WTC11 (cell line): ENCODE measurements at regions of chr12 and their contacts with region 1.

Region 1: GRCh38 chr12:52278541-52279421 is 4.3 kb downstream of the KRT86 start:
- DNase-seq: peak; percentile 87
- ATAC-seq: peak; percentile 99
- H3K4me3 Mint-ChIP-seq: peak overlapping the region; percentile 74
- H3K27ac Mint-ChIP-seq: no peak overlapping the region
- H3K4me1 Mint-ChIP-seq: peaks cover 5% of the 10 kb centered on the region
- H3K27me3 Mint-ChIP-seq: peaks cover 20% of the 10 kb centered on the region
- CTCF ChIP-seq: peak; percentile 97

Region 2: GRCh38 chr12:52156736-52157565 is 121.8 kb before region 1 on chr12:
- CTCF ChIA-PET with region 1: interaction called, 17 read pairs
- POLR2A ChIA-PET with region 1: no interaction called
- DNase-seq: peak; percentile 94
- ATAC-seq: peak; percentile 88
- H3K4me3 Mint-ChIP-seq: no peak overlapping the region
- H3K27ac Mint-ChIP-seq: no peak overlapping the region
- H3K4me1 Mint-ChIP-seq: no peaks in the 10 kb centered on the region
- H3K27me3 Mint-ChIP-seq: no peaks in the 10 kb centered on the region
- CTCF ChIP-seq: peak; percentile 97

Region 3: GRCh38 chr12:52192173-52192791 is 86.5 kb before region 1 on chr12:
- CTCF ChIA-PET with region 1: interaction called, 12 read pairs
- POLR2A ChIA-PET with region 1: no interaction called
- DNase-seq: no peak
- ATAC-seq: no peak
- H3K4me3 Mint-ChIP-seq: no peak overlapping the region
- H3K27ac Mint-ChIP-seq: no peak overlapping the region
- H3K4me1 Mint-ChIP-seq: peaks cover 11% of the 10 kb centered on the region
- H3K27me3 Mint-ChIP-seq: no peaks in the 10 kb centered on the region
- CTCF ChIP-seq: no peak

Region 4: DNA sequence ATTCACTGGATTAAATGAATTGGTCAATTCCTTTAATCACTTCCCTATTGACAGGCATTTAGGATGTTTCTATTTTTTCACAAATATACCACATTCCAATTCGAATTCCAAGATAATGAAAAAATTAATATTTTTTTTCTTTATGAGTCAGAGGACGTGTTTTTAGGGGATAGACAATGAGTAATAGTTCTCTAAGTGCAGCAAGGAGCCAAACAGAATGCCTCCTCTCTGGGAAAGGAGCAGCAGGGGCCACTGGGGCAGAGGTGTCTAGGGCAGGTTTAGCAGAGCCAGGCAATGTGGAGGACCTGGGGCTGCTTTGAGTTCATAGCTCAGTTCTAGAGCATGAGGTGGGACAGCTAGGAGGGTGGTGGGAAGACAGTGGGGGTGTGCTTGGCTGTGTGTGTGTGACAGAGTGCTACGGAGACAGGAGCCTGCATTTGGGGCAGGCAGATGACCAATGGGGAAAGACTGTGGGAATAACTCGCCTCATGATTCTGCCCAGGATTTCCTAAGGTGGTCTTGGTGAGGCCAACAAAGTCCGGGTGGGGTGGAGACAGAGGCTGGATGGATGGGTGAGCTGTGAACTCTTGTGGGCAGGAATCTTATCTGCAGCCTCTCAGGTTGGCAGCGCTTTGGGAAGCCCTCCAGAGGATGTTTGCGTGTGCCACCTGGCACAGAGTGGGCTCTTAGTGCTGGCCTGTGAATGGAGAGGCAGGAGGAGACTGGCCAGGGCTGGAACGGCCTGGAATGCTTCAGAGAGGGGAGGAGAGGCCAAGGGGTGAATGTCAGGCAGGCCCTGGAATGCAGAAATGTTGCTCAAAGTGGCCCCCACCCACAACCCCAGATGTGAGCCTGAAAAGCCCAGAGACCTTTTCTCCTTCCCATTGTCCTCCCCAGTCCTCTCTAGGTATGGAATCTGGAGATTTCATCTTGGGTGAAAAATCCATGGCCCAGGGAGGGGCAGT is 48.2 kb before region 1 on chr12:
- CTCF ChIA-PET with region 1: interaction called, 35 read pairs
- POLR2A ChIA-PET with region 1: no interaction called
- DNase-seq: no peak
- ATAC-seq: no peak
- H3K4me3 Mint-ChIP-seq: no peak overlapping the region
- H3K27ac Mint-ChIP-seq: no peak overlapping the region
- H3K4me1 Mint-ChIP-seq: peaks cover 36% of the 10 kb centered on the region
- H3K27me3 Mint-ChIP-seq: peaks cover 53% of the 10 kb centered on the region
- CTCF ChIP-seq: no peak

Region 5: DNA sequence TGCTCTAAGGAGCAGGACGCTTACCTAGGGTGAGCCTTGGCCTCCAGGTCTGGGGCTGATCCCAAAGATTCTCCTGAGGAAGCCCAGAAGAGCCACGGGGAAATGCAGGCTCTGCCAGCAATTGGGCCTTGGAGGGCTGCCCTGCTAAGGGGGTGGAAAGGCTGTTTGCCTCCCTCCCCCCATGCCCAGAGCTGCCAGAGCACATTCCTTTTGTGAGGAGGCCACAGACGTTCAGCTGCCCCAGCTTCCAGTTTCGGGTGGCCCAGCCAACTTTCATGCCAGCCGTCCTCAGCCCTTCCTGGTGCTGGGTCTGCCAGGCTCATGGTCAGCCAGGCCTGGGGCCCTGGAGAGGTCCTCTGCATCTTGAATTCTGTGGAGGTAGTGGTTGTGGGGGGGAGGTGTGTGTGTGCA is 29.7 kb before region 1 on chr12:
- CTCF ChIA-PET with region 1: interaction called, 45 read pairs
- POLR2A ChIA-PET with region 1: interaction called, 5 read pairs
- DNase-seq: no peak
- ATAC-seq: no peak
- H3K4me3 Mint-ChIP-seq: no peak overlapping the region
- H3K27ac Mint-ChIP-seq: no peak overlapping the region
- H3K4me1 Mint-ChIP-seq: peaks cover 43% of the 10 kb centered on the region
- H3K27me3 Mint-ChIP-seq: peaks cover 38% of the 10 kb centered on the region
- CTCF ChIP-seq: no peak

Region 6: DNA sequence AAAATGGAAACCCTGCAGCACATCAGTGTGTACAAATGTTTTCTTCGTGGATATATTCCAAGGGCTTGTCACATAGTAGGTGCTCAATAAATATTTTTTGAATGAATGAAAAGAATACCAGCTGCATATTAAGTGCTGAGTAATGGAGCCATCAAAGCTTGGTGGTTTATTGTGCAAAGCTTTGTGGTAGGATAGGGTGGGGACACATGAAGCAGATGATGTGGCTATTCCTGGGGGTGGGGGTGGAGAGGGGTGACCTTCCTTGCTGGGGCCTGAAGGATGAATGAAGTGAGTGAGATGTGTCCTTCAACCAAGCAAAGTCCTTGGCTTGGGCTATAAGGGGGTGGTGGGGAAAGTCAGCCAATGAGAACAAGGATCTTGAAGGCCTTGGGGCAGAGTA is 16.9 kb after region 1 on chr12:
- CTCF ChIA-PET with region 1: interaction called, 26 read pairs
- POLR2A ChIA-PET with region 1: no interaction called
- DNase-seq: no peak
- ATAC-seq: no peak
- H3K4me3 Mint-ChIP-seq: no peak overlapping the region
- H3K27ac Mint-ChIP-seq: no peak overlapping the region
- H3K4me1 Mint-ChIP-seq: no peaks in the 10 kb centered on the region
- H3K27me3 Mint-ChIP-seq: peaks cover 3% of the 10 kb centered on the region
- CTCF ChIP-seq: no peak

Region 7: GRCh38 chr12:52327052-52327829 is 48.5 kb after region 1 on chr12:
- CTCF ChIA-PET with region 1: interaction called, 42 read pairs
- POLR2A ChIA-PET with region 1: no interaction called
- DNase-seq: peak; percentile 78
- ATAC-seq: peak; percentile 98
- H3K4me3 Mint-ChIP-seq: no peak overlapping the region
- H3K27ac Mint-ChIP-seq: no peak overlapping the region
- H3K4me1 Mint-ChIP-seq: peaks cover 4% of the 10 kb centered on the region; the same call in 1 of the 2 replicates
- H3K27me3 Mint-ChIP-seq: no peaks in the 10 kb centered on the region; the same call in 1 of the 2 replicates
- CTCF ChIP-seq: peak; percentile 26; the same call in 1 of the 2 replicates